Ovary (tissue), 10 donors: ENCODE measurements at regions of chr2 and their contacts with region 1.

Region 1: GRCh38 chr2:74587664-74588277 is 33.3 kb downstream of the DOK1 start:
- DNase-seq: peak; percentile 53 to 72 (median 64)
- H3K4me3 ChIP-seq: no peak overlapping the region
- H3K27ac ChIP-seq: no peak overlapping the region
- H3K4me1 ChIP-seq: no peaks in the 10 kb centered on the region
- H3K27me3 ChIP-seq: no peaks in the 10 kb centered on the region
- CTCF ChIP-seq: peak; percentile 39 to 57 (median 56)
- EP300 ChIP-seq: no peak
- POLR2A ChIP-seq: no peak

Region 2: DNA sequence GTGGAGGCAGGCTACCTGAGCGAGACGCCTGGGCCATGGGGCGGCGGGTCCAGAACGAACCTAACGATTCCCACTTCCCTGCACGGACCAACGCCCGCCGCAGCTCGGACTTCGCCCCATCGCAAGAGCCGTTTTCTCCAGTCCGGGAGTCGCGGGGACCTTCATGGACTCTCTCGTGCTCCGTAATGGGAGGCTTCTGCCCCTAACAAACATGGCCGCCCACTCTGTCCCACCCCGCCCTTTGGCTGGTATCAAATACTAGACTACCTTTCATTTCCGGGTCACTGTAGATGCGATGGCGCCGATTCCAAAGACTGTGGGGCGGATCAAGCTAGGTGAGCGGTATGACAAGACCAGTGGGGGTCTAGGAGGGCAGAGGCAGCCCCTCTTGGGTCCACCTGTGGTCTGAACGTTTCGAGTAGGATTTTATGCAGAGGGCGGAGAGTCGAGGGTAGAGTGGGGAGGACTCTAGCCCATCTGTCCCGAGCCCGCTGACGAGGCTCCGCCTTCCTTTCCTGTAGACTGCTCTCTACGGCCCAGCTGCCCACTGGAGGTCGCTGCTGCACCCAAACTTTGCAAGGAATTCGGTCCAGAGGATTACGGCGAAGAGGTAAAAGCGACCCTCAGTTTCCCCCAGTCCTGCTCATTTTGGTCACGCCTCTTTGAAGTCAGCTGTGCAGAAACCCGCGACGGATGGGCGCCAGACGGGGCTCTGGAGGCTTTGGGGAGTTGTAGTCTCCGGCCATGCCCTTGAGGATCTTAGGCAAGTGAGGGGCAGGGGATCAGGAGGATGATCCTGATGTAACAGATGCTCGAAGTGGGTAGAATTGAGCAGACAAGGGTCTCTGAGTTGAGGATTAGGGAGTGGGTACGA is 104.7 kb before region 1 on chr2 and contains the starts of genes CCDC142 and TTC31:
- intact Hi-C with region 1: loop called in 2 of 4 experiments (anchors 5 kb)
- DNase-seq: peak; percentile 94 to 97 (median 94)
- H3K4me3 ChIP-seq: peak within 1 kb of the TSS; percentile 48
- H3K27ac ChIP-seq: peak within 1 kb of the TSS; percentile 86 to 87
- H3K4me1 ChIP-seq: peaks cover 8% of the 10 kb centered on the region
- H3K27me3 ChIP-seq: no peaks in the 10 kb centered on the region
- CTCF ChIP-seq: peak; percentile 76 to 87 (median 83)
- EP300 ChIP-seq: peak; percentile 24
- POLR2A ChIP-seq: peak; percentile 53
- total RNA-seq, gene CCDC142: 13.1 to 31.1 (median 23.4) TPM
- total RNA-seq, gene TTC31: 15.1 to 21.7 (median 15.7) TPM

Region 3: GRCh38 chr2:74491648-74492544 is 95.9 kb before region 1 on chr2:
- intact Hi-C with region 1: loop called in 1 of 4 experiments (anchors 5 kb)
- DNase-seq: no peak
- H3K4me3 ChIP-seq: no peak overlapping the region
- H3K27ac ChIP-seq: no peak overlapping the region
- H3K4me1 ChIP-seq: no peaks in the 10 kb centered on the region
- H3K27me3 ChIP-seq: no peaks in the 10 kb centered on the region
- CTCF ChIP-seq: no peak
- EP300 ChIP-seq: no peak
- POLR2A ChIP-seq: no peak

Region 4: DNA sequence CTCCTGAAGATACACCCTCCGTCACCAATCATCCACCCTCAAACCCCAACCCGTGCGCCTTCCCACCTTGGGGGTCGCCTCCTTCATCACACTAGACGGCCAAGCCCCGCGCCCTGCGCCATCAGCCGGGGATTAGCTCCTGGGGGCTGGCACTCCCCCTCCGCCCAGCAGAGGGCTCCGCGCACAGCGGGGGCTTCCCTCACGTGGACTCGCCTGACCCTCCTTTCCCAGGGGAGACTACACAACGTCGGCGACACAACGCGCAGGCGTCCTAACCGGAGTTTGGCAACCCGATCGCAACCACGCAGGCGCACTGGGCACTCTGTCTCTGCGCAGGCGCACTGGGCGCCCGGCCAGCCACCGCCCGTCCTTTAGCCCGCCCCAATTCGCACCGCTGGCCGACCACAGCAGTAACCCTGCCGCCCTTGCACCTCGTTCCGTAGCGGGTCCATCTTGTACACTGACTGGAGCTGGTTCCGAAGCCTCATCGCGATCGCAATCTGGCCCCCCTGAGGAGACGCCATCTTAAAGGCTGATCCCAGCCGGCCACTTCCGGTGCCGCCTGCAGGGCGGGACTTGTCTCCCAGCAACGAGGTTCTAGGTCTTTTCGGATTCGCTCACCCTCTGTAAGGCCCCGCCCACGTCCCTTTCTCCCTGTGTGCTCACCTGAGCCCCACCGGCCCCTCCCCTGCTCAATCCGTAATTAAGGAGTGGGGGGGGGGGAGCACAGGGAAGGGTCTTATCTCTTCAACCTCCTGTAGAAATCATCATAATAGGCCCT is 80.4 kb before region 1 on chr2 and contains the start of gene PCGF1:
- intact Hi-C with region 1: loop called in 1 of 4 experiments (anchors 10 kb)
- DNase-seq: peak; percentile 99 to 100 (median 100)
- H3K4me3 ChIP-seq: peak within 1 kb of the TSS; percentile 71
- H3K27ac ChIP-seq: peak within 1 kb of the TSS; percentile 98 to 99
- H3K4me1 ChIP-seq: peaks cover 5% of the 10 kb centered on the region
- H3K27me3 ChIP-seq: no peaks in the 10 kb centered on the region
- CTCF ChIP-seq: peak in 2 of 3 donors; percentile 19 to 37
- EP300 ChIP-seq: no peak
- POLR2A ChIP-seq: peak; percentile 22
- total RNA-seq, gene PCGF1: 9.3 to 24.3 (median 12.2) TPM

Region 5: DNA sequence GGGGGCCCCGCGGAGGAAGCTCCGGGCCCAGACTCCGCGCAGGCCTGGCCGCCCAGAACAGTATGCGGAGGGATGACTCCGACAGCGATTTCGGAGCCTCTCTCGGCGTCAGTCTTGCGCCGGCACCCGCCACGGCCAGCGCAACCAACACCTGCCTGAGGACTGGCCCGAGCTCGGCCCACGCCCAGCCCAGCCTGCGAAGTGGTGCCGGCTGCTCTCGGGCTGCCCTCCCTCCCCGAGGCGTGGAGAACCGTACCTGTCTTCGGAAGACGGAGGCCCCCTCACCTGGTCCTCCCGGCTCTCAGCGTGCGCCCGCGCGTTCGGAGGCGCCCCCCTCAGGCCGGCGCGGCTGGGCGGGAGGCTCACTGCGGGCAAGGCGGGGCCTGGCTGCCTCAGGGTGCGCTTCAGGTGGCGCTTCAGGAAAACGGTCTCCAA is 60.3 kb after region 1 on chr2 and contains the start of gene M1AP:
- intact Hi-C with region 1: no loop called
- DNase-seq: no peak
- H3K4me3 ChIP-seq: no peak within 1 kb of the TSS
- H3K27ac ChIP-seq: no peak within 1 kb of the TSS
- H3K4me1 ChIP-seq: no peaks in the 10 kb centered on the region
- H3K27me3 ChIP-seq: no peaks in the 10 kb centered on the region
- CTCF ChIP-seq: no peak
- EP300 ChIP-seq: no peak
- POLR2A ChIP-seq: no peak
- total RNA-seq, gene M1AP: 0.36 to 0.50 (median 0.45) TPM in 4 of 7 donors, not detected in the others